Posterior vena cava (tissue), 2 donors: ENCODE measurements at regions of chr1 and their contacts with region 1.

Region 1: GRCh38 chr1:172751683-172752082 is 92.8 kb downstream of the FASLG start:
- DNase-seq: no peak

Region 2: DNA sequence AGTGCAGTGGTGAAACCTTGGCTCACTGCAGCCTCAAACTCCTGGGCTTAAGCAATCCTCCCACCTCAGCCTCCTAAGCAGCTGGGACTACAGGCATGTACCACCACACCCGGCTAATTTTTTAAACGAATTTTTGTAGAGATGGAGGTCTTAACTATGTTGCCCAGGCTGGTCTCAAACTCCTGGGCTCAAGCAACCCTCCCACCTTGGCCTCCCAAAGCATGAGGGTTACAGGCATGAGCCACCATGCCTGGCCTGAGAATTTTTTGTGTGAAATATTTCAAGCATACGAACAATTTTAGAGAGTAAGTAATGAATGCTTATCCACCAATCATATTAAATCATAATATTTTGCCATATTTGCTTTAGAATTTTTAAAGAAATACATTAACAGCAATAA is 1764.8 kb before region 1 on chr1:
- intact Hi-C with region 1: no loop called
- DNase-seq: no peak

Region 3: GRCh38 chr1:172727956-172728603 is 23.6 kb before region 1 on chr1:
- intact Hi-C with region 1: loop called in 1 of 2 experiments (anchors 1 kb)
- DNase-seq: no peak